ENCODE measurements at regions of chr20 and their contacts with region 1.

Region 1: DNA sequence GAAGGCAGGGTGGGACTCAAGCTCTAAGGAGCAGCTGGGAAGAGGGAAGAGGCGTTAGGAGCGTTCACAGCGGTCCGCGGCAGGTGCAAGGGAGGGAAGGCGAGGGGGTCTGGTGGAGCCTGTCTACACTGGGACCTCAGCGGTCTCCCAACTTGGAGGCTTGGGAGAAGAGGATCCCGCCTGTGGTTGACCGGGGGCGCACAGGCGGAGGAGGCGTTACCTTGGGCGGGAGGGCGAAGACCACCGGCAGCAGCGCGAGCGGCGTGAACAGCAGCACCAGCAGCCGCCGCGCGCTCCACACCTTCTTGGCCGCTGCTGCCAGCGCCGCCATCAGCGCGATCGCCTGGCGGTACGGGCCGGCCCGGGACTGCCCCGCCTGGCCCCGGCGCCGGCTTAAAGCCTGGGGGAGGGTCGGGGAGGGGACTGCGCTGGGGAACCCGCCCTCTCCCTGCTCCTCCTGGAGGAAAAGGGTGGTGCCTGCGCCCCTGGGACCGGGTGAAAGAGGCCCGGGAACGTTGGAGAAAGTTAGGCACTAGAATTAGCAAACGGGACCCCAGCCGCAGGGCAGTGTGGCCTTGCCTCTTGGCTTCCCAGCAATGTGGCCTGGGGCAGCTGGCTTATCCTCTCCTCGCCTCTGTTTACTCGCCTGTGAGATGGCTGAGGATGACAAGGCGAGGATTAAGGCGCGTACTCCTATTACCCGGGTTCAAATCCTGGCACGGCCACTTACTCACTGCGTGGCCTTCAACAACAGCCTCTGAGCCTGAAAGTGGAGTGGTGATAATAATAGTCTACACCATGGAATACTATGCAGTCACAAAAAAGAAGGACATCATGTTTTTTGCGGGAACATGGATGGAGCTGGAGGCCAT is at the start of gene SLC13A3:
- DNase-seq: peak; percentile 79
- ATAC-seq: peak; percentile 95
- H3K4me3 ChIP-seq: peak within 1 kb of the TSS; percentile 64 to 83 (median 66)
- H3K27ac ChIP-seq: peak within 1 kb of the TSS; percentile 72
- H3K4me1 ChIP-seq: peaks cover 68% of the 10 kb centered on the region
- H3K27me3 ChIP-seq: no peaks in the 10 kb centered on the region
- CTCF ChIP-seq: peak; percentile 10
- EP300 ChIP-seq: 0 out of 4 replicates have a peak, but pooled peaks of 1 of the 2 experiments have one; percentile 9
- POLR2A ChIP-seq: peak; percentile 92 to 96
- RAD21 ChIP-seq: peak; percentile 82
- total RNA-seq, gene SLC13A3: 27.9 and 66.5 TPM in 2 replicates

Region 2: GRCh38 chr20:45880988-45881788 is 770.1 kb before region 1 on chr20 and contains the start of gene ZSWIM1:
- CTCF ChIA-PET with region 1: no interaction called
- POLR2A ChIA-PET with region 1: no interaction called
- in situ Hi-C with region 1: no loop called
- intact Hi-C with region 1: no loop called
- DNase-seq: peak; percentile 100
- ATAC-seq: peak; percentile 98
- H3K4me3 ChIP-seq: peak within 1 kb of the TSS; percentile 83 to 92 (median 89)
- H3K27ac ChIP-seq: peak within 1 kb of the TSS; percentile 75
- H3K4me1 ChIP-seq: peaks cover 22% of the 10 kb centered on the region
- H3K27me3 ChIP-seq: no peaks in the 10 kb centered on the region; a peak in 1 of 5 replicates
- CTCF ChIP-seq: no peak
- EP300 ChIP-seq: no peak; a peak in 1 of 4 replicates
- POLR2A ChIP-seq: peak; percentile 97 to 99
- RAD21 ChIP-seq: peak; percentile 34; the same call in 1 of the 2 replicates
- total RNA-seq, gene ZSWIM1: 11.7 and 16.5 TPM in 2 replicates

Region 3: GRCh38 chr20:46568570-46569129 is 82.7 kb before region 1 on chr20:
- CTCF ChIA-PET with region 1: no interaction called
- POLR2A ChIA-PET with region 1: interaction called, 13 read pairs
- in situ Hi-C with region 1: no loop called
- intact Hi-C with region 1: no loop called
- DNase-seq: peak; percentile 79
- ATAC-seq: peak; percentile 77
- H3K4me3 ChIP-seq: peak overlapping the region in 1 of 3 experiments; percentile 62; a peak in 4 of 6 replicates
- H3K27ac ChIP-seq: peak overlapping the region; percentile 32
- H3K4me1 ChIP-seq: peaks cover 36% of the 10 kb centered on the region
- H3K27me3 ChIP-seq: no peaks in the 10 kb centered on the region
- CTCF ChIP-seq: peak; percentile 30; the same call in 1 of the 2 replicates
- EP300 ChIP-seq: peak in 1 of 2 experiments; percentile 17; a peak in 1 of 4 replicates
- POLR2A ChIP-seq: no peak
- RAD21 ChIP-seq: peak; percentile 39

Region 4: GRCh38 chr20:46631212-46631869 is 20.0 kb before region 1 on chr20:
- CTCF ChIA-PET with region 1: no interaction called
- POLR2A ChIA-PET with region 1: interaction called, 72 read pairs
- in situ Hi-C with region 1: no loop called
- intact Hi-C with region 1: no loop called
- DNase-seq: peak; percentile 98
- ATAC-seq: peak; percentile 79
- H3K4me3 ChIP-seq: no peak overlapping the region
- H3K27ac ChIP-seq: peak overlapping the region; percentile 59
- H3K4me1 ChIP-seq: peaks cover 88% of the 10 kb centered on the region
- H3K27me3 ChIP-seq: no peaks in the 10 kb centered on the region
- CTCF ChIP-seq: no peak
- EP300 ChIP-seq: peak in 1 of 2 experiments; percentile 90; a peak in 2 of 4 replicates
- POLR2A ChIP-seq: peak in 1 of 2 experiments; percentile 55; a peak in 2 of 4 replicates
- RAD21 ChIP-seq: no peak

Region 5: GRCh38 chr20:46666818-46667515 is 15.6 kb after region 1 on chr20:
- CTCF ChIA-PET with region 1: no interaction called
- POLR2A ChIA-PET with region 1: interaction called, 55 read pairs
- in situ Hi-C with region 1: no loop called
- intact Hi-C with region 1: loop called (anchors 2 kb)
- DNase-seq: peak; percentile 100
- ATAC-seq: peak; percentile 90
- H3K4me3 ChIP-seq: no peak overlapping the region; a peak in 1 of 6 replicates
- H3K27ac ChIP-seq: peak overlapping the region; percentile 84
- H3K4me1 ChIP-seq: peaks cover 86% of the 10 kb centered on the region
- H3K27me3 ChIP-seq: no peaks in the 10 kb centered on the region
- CTCF ChIP-seq: no peak
- EP300 ChIP-seq: peak; percentile 100
- POLR2A ChIP-seq: no peak
- RAD21 ChIP-seq: peak; percentile 71

Region 6: DNA sequence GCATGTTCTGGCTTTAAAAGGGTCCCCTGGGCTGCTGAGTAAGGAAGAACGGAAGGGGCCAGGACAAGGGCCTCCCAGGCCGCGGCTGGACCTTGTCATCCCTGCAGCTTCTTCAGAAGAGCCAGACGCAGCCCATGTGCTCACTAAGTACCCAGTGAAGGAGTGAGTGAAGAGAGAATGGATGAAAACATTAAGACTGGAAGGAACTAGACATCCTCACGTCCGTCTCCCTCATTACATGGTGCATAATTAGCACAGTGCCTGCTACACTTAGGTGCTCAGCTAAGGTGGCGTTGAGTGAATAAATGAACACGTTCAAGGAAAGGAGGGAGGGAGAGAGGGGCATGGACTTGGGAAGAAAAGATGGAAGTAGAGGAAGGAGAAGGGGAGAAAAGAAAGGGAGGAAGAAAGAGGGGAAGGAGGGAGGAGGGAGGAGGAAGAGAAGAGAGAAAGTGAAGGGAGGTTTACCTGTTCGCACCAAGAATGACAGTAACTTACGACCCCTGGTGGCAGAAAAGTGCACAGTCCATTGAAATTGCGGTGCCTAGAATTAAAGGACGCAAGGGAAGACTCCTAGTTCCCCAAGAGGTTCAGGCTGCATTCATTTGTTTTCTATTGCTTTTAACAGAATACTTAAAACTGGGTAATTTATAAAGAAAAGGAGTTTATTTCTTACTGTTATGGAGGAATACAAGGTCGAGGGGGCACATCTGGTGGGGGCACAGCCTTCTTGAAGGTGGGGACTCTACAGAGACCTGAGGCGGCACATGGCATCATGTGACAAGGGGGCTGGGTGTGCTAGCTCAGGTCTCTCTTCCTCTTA is 29.9 kb after region 1 on chr20:
- CTCF ChIA-PET with region 1: interaction called, 20 read pairs
- POLR2A ChIA-PET with region 1: interaction called, 56 read pairs
- in situ Hi-C with region 1: loop called (anchors 5 kb)
- intact Hi-C with region 1: loop called (anchors 2 kb)
- DNase-seq: peak; percentile 82
- ATAC-seq: peak; percentile 59
- H3K4me3 ChIP-seq: no peak overlapping the region
- H3K27ac ChIP-seq: no peak overlapping the region
- H3K4me1 ChIP-seq: peaks cover 88% of the 10 kb centered on the region
- H3K27me3 ChIP-seq: no peaks in the 10 kb centered on the region
- CTCF ChIP-seq: peak; percentile 97
- EP300 ChIP-seq: no peak
- POLR2A ChIP-seq: no peak
- RAD21 ChIP-seq: peak; percentile 98

Region 7: DNA sequence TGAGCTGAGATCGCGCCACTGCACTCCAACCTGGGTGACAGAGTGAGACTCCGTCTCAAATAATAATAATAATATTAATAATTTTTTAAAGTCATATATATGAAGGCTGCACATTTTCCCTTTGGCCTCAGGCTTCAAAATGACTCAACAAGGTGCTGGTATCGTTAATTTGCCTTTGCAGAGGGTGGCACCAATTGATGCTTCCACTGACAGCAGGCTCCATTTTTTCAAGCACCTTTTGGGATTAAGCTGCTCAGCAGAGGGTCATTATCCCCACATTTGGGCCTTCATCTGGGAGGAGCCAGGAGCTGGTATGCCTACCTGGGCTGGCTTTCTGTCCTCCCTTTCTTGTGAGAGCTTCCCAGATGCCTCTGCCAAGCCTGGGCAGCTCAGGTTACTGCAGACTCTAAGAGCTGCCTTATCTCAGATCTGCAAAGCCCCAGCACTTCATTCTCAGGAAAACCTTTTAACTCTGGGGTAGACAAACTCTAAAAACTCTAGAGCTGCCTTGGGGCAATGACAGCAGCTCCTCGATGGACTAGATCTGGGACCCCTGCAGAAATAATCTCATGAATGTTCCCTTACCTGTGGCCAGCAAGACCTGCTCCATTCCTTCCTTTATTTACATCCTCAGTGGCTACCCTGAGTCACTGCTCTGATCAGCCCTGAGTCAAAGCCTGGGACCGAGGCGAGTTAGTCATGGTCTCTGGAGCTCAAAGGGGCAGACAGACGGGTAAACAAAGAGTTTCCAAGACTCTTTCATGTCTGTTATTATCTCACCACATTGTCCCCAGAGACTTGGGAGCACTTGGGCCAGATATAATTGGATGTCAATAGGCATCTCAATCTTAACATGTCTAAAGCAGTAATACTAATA is 163.3 kb after region 1 on chr20:
- CTCF ChIA-PET with region 1: no interaction called
- POLR2A ChIA-PET with region 1: no interaction called
- in situ Hi-C with region 1: no loop called
- intact Hi-C with region 1: no loop called
- DNase-seq: peak; percentile 72
- ATAC-seq: peak; percentile 87
- H3K4me3 ChIP-seq: no peak overlapping the region
- H3K27ac ChIP-seq: no peak overlapping the region
- H3K4me1 ChIP-seq: peaks cover 11% of the 10 kb centered on the region; the same call in 1 of the 2 replicates
- H3K27me3 ChIP-seq: peaks cover 0 to 15% of the 10 kb centered on the region in 2 experiments; a peak in 3 of 5 replicates
- CTCF ChIP-seq: no peak
- EP300 ChIP-seq: peak in 1 of 2 experiments; percentile 48; a peak in 1 of 4 replicates
- POLR2A ChIP-seq: no peak
- RAD21 ChIP-seq: no peak

Region 8: GRCh38 chr20:46835418-46835817 is 184.1 kb after region 1 on chr20:
- CTCF ChIA-PET with region 1: no interaction called
- POLR2A ChIA-PET with region 1: no interaction called
- in situ Hi-C with region 1: no loop called
- intact Hi-C with region 1: no loop called
- DNase-seq: peak; percentile 62
- ATAC-seq: no peak; the same call in 2 of the 3 replicates
- H3K4me3 ChIP-seq: no peak overlapping the region
- H3K27ac ChIP-seq: no peak overlapping the region
- H3K4me1 ChIP-seq: no peaks in the 10 kb centered on the region
- H3K27me3 ChIP-seq: peaks cover 2 to 29% of the 10 kb centered on the region in 2 experiments; a peak in 4 of 5 replicates
- CTCF ChIP-seq: no peak
- EP300 ChIP-seq: no peak
- POLR2A ChIP-seq: no peak
- RAD21 ChIP-seq: no peak

Measured in HepG2 (cell line).